OCI-LY7 (cell line): ENCODE measurements at regions of chr17 and their contacts with region 1.

Region 1: DNA sequence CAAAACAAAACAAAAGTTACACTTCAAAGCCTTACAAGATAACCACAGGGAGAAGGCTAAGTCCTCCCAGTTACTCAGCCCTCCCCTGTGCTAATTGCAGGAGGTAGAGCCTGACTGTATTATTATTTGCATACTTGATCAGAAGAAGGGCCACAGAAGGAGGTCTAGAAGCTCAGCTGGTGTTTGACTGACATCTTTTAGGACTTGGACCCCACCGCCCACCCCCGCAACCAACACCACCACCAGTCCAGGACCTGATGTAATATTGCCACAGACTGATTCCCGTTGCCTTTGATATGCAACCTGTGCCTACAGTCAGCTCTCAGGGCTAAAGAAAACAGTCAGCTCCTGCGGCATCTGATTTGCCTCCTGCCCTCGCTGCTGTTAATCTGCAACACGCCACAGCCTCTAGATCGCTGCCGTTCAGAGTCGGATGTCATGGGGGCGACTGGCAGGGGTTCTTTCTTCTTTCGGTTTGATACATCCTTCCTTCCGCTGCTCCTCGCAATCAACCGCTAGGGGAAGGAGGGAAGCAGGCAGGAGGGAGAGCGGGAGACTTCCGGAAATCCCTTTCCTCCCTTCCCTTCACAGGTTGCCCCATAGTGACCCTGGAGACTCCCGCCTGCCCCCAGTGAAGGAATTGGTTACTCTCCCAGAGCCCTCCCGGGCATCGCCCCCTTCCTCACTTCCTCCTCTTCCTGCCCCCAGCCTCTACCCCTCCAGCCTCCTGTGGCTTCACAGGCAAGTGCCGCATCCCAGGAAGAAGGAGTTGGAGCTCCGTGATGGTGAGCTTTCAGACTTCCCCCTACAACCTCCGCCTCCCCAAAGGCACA is 90.5 kb upstream of the SOX9 start:
- DNase-seq: peak; percentile 77
- H3K4me3 ChIP-seq: peak overlapping the region; percentile 69
- H3K27ac ChIP-seq: peak overlapping the region; percentile 87
- H3K4me1 ChIP-seq: peaks cover 83% of the 10 kb centered on the region
- CTCF ChIP-seq: peak; percentile 46

Region 2: GRCh38 chr17:71926746-71927398 is 103.4 kb before region 1 on chr17:
- CTCF ChIA-PET with region 1: no interaction called
- POLR2A ChIA-PET with region 1: no interaction called
- intact Hi-C with region 1: no loop called
- DNase-seq: no peak
- H3K4me3 ChIP-seq: no peak overlapping the region
- H3K27ac ChIP-seq: no peak overlapping the region
- H3K4me1 ChIP-seq: no peaks in the 10 kb centered on the region
- CTCF ChIP-seq: no peak

Region 3: DNA sequence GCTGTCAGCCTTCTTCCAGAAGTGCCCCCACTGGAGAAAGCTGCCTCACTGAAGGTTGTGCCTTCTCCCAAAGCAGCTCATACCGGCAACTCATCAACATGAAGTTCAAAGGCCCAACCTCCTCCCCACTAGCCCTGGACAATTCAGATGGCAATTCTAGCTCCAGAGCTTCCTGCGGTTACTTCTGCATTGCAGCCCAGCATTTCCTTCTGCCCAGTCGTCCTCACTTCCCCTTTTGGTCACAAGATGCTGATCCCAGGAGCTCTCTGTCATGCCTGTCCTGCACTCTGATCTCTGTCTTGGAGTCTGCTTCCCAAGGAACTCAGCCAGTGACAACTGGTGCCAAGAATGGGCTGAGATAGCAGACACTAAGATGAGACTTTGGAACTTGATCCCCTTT is 87.7 kb before region 1 on chr17:
- CTCF ChIA-PET with region 1: no interaction called
- POLR2A ChIA-PET with region 1: no interaction called
- intact Hi-C with region 1: no loop called
- DNase-seq: no peak
- H3K4me3 ChIP-seq: no peak overlapping the region
- H3K27ac ChIP-seq: no peak overlapping the region
- H3K4me1 ChIP-seq: no peaks in the 10 kb centered on the region
- CTCF ChIP-seq: no peak

Region 4: GRCh38 chr17:72145981-72146380 is 115.7 kb after region 1 on chr17:
- CTCF ChIA-PET with region 1: no interaction called
- POLR2A ChIA-PET with region 1: no interaction called
- intact Hi-C with region 1: no loop called
- DNase-seq: no peak
- H3K4me3 ChIP-seq: no peak overlapping the region
- H3K27ac ChIP-seq: no peak overlapping the region
- H3K4me1 ChIP-seq: no peaks in the 10 kb centered on the region
- CTCF ChIP-seq: no peak

Region 5: GRCh38 chr17:72510397-72511016 is 480.2 kb after region 1 on chr17:
- CTCF ChIA-PET with region 1: no interaction called
- POLR2A ChIA-PET with region 1: no interaction called
- intact Hi-C with region 1: loop called (anchors 5 kb)
- DNase-seq: peak; percentile 96
- H3K4me3 ChIP-seq: peak overlapping the region; percentile 15
- H3K27ac ChIP-seq: peak overlapping the region; percentile 67
- H3K4me1 ChIP-seq: peaks cover 45% of the 10 kb centered on the region
- CTCF ChIP-seq: no peak